Transverse colon (tissue), 4 donors: ENCODE measurements at regions of chr2 and their contacts with region 1.

Region 1: DNA sequence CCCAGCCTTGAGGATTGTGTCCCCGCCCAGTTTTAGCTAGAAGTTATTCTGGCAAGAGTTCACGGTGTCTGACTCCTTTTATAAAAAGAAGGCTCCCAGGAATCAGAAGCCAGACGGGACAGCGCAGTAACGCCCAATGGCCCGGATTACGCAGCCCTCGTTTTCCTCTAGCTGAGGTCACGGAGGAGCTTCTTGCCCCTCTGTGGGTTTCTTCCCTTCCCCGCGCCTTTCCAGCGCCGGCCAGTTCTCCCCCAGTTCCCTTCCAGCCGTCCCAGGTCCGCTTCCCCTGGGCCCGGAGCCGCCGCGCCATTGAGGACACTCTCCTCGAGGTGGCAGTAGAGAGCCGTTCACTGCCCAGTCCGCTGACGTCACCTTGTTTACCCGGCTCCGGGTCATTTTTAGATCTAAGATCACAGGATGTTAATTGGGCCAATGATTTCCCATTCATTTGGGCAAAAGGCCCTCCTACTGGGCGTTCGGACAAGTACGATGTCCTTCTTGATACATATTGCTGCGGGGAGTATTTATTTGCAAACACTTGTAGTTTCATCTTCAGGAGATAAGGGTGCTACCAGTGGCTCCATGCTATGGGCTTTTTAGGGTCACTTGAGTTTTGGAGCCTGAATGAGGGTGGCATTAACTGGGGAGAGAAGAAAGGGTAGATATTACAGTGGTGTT is 81.5 kb upstream of the PPM1B start:
- DNase-seq: peak; percentile 91
- H3K4me3 ChIP-seq: peak overlapping the region; percentile 10 to 44 (median 26)
- H3K27ac ChIP-seq: peak overlapping the region; percentile 59 to 76 (median 69)
- H3K4me1 ChIP-seq: peaks cover 4 to 19% (median 14%) of the 10 kb centered on the region in 4 donors
- H3K27me3 ChIP-seq: no peaks in the 10 kb centered on the region
- CTCF ChIP-seq: peak; percentile 94 to 97 (median 95)
- EP300 ChIP-seq: no peak
- POLR2A ChIP-seq: no peak

Region 2: DNA sequence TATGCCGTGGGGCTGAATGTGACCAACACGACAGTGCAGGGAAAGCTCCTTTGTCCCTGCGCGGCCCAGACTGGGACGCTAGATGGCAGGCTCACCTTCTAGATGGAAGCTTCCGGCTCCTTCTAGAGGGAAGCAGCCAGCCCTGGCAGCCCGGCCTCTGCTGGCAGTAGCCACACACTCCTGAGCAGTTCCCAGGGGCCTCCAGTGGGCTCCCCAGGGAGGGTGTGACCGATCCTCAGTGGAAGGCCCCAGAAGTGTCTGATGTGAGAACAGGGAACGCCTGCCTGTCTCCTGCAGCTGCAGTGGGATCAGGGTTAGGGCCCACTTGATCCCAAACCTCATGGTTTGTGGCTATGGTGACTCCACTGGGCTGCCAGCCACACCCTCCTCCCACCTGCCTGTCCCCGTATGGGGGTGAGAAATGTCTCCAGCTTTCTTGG is 42.9 kb before region 1 on chr2:
- in situ Hi-C with region 1: no loop called
- intact Hi-C with region 1: no loop called
- DNase-seq: peak; percentile 87
- H3K4me3 ChIP-seq: no peak overlapping the region
- H3K27ac ChIP-seq: no peak overlapping the region
- H3K4me1 ChIP-seq: peaks cover 0 to 7% (median 6%) of the 10 kb centered on the region in 4 donors
- H3K27me3 ChIP-seq: no peaks in the 10 kb centered on the region
- CTCF ChIP-seq: peak; percentile 79 to 81 (median 81)
- EP300 ChIP-seq: no peak
- POLR2A ChIP-seq: no peak

Region 3: DNA sequence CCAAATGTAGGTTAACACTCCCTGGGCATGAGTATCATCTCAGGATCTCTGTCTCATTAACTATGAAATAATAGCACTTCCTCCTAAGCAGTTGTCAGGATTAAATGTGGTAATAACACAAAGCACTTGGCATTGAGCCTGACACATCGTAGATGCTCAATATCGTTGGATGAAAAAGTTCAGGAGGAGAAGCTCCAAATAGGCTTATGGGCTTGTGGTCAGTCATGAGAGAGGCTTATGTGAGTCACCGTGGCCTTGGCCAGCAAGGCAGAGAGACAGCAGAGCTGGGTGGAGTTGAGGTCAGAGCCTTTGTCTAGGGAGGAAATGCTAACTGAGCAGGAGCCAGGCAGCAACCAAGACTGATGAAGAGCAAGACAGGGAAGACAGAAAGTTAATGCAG is 13.2 kb after region 1 on chr2:
- in situ Hi-C with region 1: no loop called
- intact Hi-C with region 1: no loop called
- DNase-seq: peak; percentile 40
- H3K4me3 ChIP-seq: no peak overlapping the region
- H3K27ac ChIP-seq: no peak overlapping the region
- H3K4me1 ChIP-seq: peaks cover 0 to 17% (median 4%) of the 10 kb centered on the region in 4 donors
- H3K27me3 ChIP-seq: no peaks in the 10 kb centered on the region
- CTCF ChIP-seq: no peak
- EP300 ChIP-seq: no peak
- POLR2A ChIP-seq: no peak

Region 4: DNA sequence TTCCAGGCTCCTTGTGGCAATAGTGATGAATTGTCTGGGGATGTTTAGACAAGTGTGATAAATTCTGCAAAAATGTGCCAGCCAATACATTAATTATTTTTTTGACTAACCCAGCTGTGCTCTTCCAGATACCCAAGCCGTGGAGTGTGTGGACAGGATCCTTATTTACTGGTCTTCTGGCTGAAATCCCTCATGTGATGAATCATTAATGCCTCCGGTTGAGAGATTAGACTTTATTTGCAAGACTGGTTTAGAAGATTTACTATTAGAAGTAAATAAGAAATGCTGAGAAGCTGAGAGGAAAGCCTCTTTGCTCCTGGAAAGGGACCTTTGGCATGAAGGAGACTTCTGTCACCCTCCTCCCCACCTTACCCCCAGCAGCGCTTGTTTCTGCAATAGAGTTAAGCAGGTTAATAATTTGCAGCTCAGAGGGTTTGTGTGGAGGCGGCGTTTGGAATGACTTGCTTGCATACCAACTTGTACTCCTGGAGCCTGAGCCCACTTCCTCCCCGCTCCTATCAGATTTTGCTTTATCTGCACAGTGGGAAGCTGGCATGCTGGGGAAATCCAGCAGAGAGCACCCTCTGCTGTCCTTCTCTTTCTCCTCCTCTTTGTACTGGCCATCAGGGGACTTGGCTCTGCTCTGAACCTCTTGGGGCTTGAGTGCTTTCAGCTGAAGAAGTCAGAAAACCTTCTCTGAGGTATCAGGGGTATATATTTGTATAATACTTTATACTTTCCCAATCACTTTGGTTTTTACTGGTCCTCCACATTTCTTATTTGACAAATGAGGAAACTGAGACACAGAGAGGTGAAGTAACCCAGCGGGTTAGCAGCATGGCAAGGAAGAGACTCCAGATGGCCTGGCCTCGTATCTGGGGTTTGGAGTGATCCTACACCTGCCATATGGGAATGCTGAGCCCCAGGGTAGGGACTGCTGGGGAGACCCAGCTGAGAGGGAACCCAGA is 204.4 kb after region 1 on chr2:
- in situ Hi-C with region 1: loop called (anchors 10 to 25 kb)
- intact Hi-C with region 1: no loop called
- DNase-seq: peak; percentile 75
- H3K4me3 ChIP-seq: no peak overlapping the region
- H3K27ac ChIP-seq: peak overlapping the region; percentile 7 to 71 (median 47)
- H3K4me1 ChIP-seq: peaks cover 0 to 26% (median 11%) of the 10 kb centered on the region in 4 donors
- H3K27me3 ChIP-seq: no peaks in the 10 kb centered on the region
- CTCF ChIP-seq: peak; percentile 43 to 79 (median 59)
- EP300 ChIP-seq: no peak
- POLR2A ChIP-seq: no peak